Heart right ventricle (tissue), 16 donors: ENCODE measurements at regions of chr2 and their contacts with region 1.

Region 1: DNA sequence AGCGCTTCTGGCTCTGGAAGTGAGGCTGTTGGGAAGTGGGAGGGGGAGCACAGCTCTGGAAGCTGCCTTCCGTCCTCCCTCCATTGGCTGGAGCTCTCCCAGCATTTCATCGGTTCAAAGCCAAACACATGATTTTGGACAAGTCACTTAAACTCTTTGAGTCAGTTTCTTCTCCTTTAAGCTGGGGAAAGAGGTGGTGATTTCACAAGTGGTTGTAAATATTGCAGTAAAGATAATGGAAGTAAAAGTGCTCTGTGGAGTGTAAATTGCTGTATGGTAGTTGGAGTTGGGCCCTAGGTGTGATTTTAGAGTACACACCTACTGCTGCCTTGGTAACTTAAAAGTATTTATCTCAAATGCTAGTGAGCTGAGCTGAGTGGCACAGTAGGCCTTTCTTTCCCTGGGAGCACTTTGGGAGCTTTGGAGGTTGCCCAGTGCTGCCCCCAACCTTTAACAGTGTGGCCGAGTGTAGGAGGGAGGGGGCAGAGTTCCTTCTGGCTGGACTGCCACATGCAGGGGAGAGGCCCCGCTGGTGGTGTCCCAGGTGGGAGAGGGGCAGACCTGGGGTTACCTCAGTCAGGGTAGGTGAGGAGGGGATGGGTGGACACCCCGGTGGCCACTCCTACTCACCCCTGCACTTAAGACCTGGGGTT is 54.7 kb downstream of the ASAP2 start:
- DNase-seq: peak in 1 of 2 donors; percentile 67
- ATAC-seq: peak in 5 of 8 donors; percentile 20 to 40 (median 27)
- H3K4me3 ChIP-seq: no peak overlapping the region
- H3K27ac ChIP-seq: peak overlapping the region; percentile 30 to 95 (median 88)
- H3K4me1 ChIP-seq: peaks cover 51 to 99% (median 89%) of the 10 kb centered on the region in 9 donors
- H3K27me3 ChIP-seq: no peaks in the 10 kb centered on the region
- CTCF ChIP-seq: peak in 1 of 9 donors; percentile 18

Region 2: DNA sequence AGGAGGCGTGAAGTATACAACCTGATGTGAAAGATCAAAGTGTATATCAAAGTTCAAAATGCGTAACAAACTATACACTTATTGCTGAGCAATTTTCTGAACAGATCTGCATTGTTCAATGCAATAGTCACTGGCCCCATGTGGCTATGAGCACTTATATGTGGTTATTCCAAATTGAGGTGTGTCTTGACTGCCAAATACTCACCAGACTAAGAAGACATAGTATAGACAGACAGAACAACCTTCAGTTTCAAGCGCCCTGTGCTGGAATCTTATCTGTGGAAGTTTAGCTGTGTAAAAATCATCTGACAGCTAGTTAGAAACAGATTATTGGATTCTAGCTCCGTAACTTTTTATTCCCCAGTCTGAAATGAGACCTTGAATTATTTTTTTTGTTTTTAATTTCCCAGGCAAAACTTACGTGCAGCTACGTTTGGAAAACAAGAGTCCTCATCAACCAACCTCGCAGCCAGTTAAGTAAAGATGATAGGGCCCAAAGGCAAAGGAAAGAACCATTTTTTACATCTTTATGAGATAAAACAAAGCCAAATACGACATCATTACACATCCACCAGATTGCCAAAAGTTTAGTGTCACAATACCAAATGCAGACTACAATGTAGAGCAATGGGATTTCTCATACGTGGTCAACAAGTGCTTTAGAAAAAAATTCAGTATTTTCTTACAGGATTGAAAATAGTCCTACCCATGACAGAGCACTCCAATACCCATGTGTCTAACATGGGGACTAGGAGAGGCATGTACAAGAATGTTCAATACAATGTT is 295.0 kb before region 1 on chr2:
- intact Hi-C with region 1: no loop called
- DNase-seq: no peak
- ATAC-seq: no peak
- H3K4me3 ChIP-seq: no peak overlapping the region
- H3K27ac ChIP-seq: no peak overlapping the region
- H3K4me1 ChIP-seq: no peaks in the 10 kb centered on the region
- H3K27me3 ChIP-seq: no peaks in the 10 kb centered on the region
- CTCF ChIP-seq: no peak

Region 3: DNA sequence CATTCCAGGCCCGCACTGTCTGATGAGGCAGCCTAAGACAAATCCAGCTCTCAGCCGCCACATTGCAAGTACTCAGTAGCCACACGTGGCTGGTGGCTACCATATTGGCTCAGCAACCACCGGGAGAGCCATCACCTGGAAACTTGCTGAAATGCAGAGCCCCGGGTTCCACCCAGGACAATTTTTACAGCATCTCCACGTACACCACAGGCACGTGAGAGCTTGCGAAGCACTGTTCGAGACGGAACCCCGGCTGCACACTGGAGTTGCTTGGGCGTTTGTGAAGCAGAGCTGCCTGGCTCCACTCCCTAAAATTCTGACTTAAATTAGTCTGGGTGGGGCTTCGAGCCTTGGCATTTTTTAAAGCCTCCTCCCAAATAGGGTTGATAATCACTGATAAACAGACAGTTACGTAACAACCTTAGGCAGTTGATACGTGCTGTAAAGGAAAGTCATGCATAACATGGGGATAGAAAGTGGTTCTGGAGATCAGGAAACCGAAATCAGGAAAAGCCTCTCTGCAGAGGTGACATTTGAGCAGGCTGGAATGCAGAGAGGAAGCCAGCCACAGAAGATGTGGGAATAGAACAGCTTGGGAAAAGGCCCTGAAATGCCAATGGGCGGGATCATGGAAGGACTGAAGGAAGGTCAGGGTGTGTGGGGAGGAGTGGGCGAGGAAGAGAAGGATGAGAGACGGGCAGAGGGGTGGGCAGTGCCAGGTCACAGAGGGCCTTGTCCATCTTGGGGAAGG is 48.5 kb before region 1 on chr2:
- intact Hi-C with region 1: loop called in 5 of 10 experiments (anchors 1 to 10 kb)
- DNase-seq: no peak
- ATAC-seq: peak in 7 of 8 donors; percentile 31 to 63 (median 46)
- H3K4me3 ChIP-seq: peak overlapping the region in 1 of 10 donors; percentile 9
- H3K27ac ChIP-seq: peak overlapping the region; percentile 27 to 89 (median 71)
- H3K4me1 ChIP-seq: peaks cover 22 to 91% (median 59%) of the 10 kb centered on the region in 9 donors
- H3K27me3 ChIP-seq: peaks cover 0 to 2% (median 0%) of the 10 kb centered on the region in 7 donors
- CTCF ChIP-seq: no peak

Region 4: GRCh38 chr2:9310377-9310776 is 49.0 kb after region 1 on chr2:
- intact Hi-C with region 1: loop called in 1 of 10 experiments (anchors 2 kb)
- DNase-seq: peak; percentile 61 to 67
- ATAC-seq: peak; percentile 75 to 94 (median 88)
- H3K4me3 ChIP-seq: no peak overlapping the region
- H3K27ac ChIP-seq: peak overlapping the region; percentile 59 to 91 (median 80)
- H3K4me1 ChIP-seq: peaks cover 20 to 66% (median 45%) of the 10 kb centered on the region in 9 donors
- H3K27me3 ChIP-seq: no peaks in the 10 kb centered on the region
- CTCF ChIP-seq: no peak

Region 5: GRCh38 chr2:9326975-9327374 is 65.6 kb after region 1 on chr2:
- intact Hi-C with region 1: loop called in 1 of 10 experiments (anchors 10 kb)
- DNase-seq: no peak
- ATAC-seq: peak in 1 of 8 donors; percentile 32
- H3K4me3 ChIP-seq: no peak overlapping the region
- H3K27ac ChIP-seq: peak overlapping the region in 4 of 10 donors; percentile 13 to 54 (median 24)
- H3K4me1 ChIP-seq: peaks cover 0 to 53% (median 32%) of the 10 kb centered on the region in 9 donors
- H3K27me3 ChIP-seq: no peaks in the 10 kb centered on the region
- CTCF ChIP-seq: no peak